K562 (cell line): ENCODE measurements at regions of chr15 and their contacts with region 1.

Region 1: DNA sequence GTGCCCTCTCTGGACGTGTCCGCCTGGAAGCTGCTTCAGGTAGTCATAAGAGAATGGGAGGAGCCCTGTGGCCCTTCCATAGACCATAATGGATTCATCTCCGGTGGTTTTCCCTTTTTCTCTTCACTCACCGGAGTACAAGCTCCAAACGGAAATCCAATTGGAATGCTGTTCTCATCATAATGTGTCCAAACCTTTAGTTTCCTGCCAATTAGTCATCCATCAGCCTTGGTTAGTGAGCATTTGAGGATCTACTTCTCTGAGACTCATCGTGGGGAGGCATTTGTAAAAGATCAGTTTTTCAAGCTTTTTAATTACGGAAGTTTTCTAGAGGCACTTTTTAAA is 34.9 kb downstream of the ABHD2 start:
- DNase-seq: no peak
- ATAC-seq: no peak
- H3K4me3 ChIP-seq: no peak overlapping the region
- H3K27ac ChIP-seq: no peak overlapping the region
- H3K4me1 ChIP-seq: no peaks in the 10 kb centered on the region
- H3K27me3 ChIP-seq: no peaks in the 10 kb centered on the region
- CTCF ChIP-seq: no peak
- EP300 ChIP-seq: no peak
- POLR2A ChIP-seq: no peak
- RAD21 ChIP-seq: no peak

Region 2: GRCh38 chr15:89112341-89112971 is 10.7 kb before region 1 on chr15:
- CTCF ChIA-PET with region 1: no interaction called
- POLR2A ChIA-PET with region 1: interaction called, 11 read pairs
- in situ Hi-C with region 1: no loop called
- intact Hi-C with region 1: no loop called
- DNase-seq: no peak
- ATAC-seq: no peak
- H3K4me3 ChIP-seq: no peak overlapping the region
- H3K27ac ChIP-seq: no peak overlapping the region
- H3K4me1 ChIP-seq: peaks cover 4 to 40% of the 10 kb centered on the region in 2 experiments; a peak in 4 of 5 replicates
- H3K27me3 ChIP-seq: no peaks in the 10 kb centered on the region
- CTCF ChIP-seq: no peak
- EP300 ChIP-seq: no peak
- POLR2A ChIP-seq: no peak
- RAD21 ChIP-seq: no peak

Region 3: GRCh38 chr15:89139009-89139399 is 15.9 kb after region 1 on chr15:
- CTCF ChIA-PET with region 1: no interaction called
- POLR2A ChIA-PET with region 1: no interaction called
- in situ Hi-C with region 1: no loop called
- intact Hi-C with region 1: no loop called
- DNase-seq: no peak
- ATAC-seq: peak; percentile 57; the same call in 2 of the 3 replicates
- H3K4me3 ChIP-seq: no peak overlapping the region
- H3K27ac ChIP-seq: no peak overlapping the region
- H3K4me1 ChIP-seq: no peaks in the 10 kb centered on the region; a peak in 2 of 5 replicates
- H3K27me3 ChIP-seq: no peaks in the 10 kb centered on the region
- CTCF ChIP-seq: no peak
- EP300 ChIP-seq: no peak
- POLR2A ChIP-seq: no peak
- RAD21 ChIP-seq: no peak

Region 4: DNA sequence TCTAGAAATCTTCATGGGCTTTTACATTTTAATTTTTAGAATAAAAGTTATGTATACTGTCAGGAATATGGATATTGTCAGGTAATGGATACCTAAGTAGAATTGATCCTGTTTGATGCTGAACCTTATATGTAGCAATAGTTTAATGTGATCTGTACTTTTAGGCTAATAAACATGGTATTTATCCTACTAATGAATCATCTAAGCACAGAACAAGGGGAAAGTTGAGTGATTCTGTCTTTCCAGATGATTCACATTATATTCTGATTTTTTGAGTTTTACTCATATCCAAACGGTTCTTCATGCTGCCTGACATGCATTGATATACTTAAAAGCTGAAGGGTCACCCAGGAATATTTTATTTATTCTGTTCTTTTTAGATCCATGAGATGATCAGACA is 155.2 kb after region 1 on chr15:
- CTCF ChIA-PET with region 1: no interaction called
- POLR2A ChIA-PET with region 1: no interaction called
- in situ Hi-C with region 1: no loop called
- intact Hi-C with region 1: no loop called
- DNase-seq: no peak
- ATAC-seq: no peak
- H3K4me3 ChIP-seq: no peak overlapping the region
- H3K27ac ChIP-seq: no peak overlapping the region
- H3K4me1 ChIP-seq: no peaks in the 10 kb centered on the region
- H3K27me3 ChIP-seq: no peaks in the 10 kb centered on the region
- CTCF ChIP-seq: no peak
- EP300 ChIP-seq: no peak
- POLR2A ChIP-seq: no peak
- RAD21 ChIP-seq: no peak